Endothelial cell of umbilical vein (primary cell): ENCODE measurements at regions of chr5 and their contacts with region 1.

Region 1: DNA sequence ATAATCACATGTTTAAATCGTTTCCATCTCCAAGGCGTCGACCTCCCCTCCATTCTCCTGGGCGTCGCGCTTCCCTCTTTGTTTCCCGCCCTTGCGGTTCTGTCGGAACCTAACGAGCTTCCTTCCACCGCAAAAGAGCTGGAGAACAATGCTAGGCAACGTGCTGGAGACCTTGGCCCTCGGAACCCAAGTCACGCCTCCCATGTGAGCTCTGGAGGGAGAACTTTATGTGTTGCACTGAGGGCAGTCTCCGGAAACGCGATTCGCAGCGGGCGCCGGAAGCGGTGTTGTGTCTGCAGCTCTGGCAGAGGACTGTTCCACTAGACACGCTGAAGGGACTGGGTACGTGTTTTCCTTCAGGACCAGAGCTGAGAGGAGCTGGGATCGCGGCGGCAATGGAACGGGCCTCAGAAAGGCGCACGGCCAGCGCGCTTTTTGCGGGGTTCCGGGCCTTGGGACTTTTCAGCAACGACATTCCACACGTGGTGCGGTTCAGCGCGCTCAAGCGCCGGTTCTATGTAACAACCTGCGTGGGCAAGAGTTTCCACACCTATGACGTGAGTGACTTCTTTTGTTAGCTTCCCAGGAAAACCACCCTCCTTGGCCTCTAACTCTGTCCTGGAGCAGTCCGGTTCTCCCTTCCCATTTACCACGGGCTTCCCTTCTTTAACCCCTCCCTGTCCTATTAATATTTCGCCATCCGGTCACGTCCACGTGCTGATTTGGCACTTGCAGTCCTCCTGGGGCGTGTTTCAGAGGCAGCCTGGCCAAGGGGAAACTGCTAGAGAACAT is at the start of gene WDR36:
- DNase-seq: peak; percentile 91
- H3K4me3 ChIP-seq: peak within 1 kb of the TSS; percentile 25 to 95 (median 95)
- H3K27ac ChIP-seq: peak within 1 kb of the TSS; percentile 46
- H3K4me1 ChIP-seq: peaks cover 18% of the 10 kb centered on the region
- H3K27me3 ChIP-seq: no peaks in the 10 kb centered on the region
- CTCF ChIP-seq: no peak
- POLR2A ChIP-seq: peak; percentile 58
- total RNA-seq, gene WDR36: 30.2 and 33.8 TPM in 2 replicates

Region 2: GRCh38 chr5:110269478-110270142 is 822.6 kb before region 1 on chr5:
- CTCF ChIA-PET with region 1: no interaction called
- POLR2A ChIA-PET with region 1: no interaction called
- dilution Hi-C with region 1: no loop called
- intact Hi-C with region 1: no loop called
- DNase-seq: no peak
- H3K4me3 ChIP-seq: no peak overlapping the region
- H3K27ac ChIP-seq: no peak overlapping the region
- H3K4me1 ChIP-seq: no peaks in the 10 kb centered on the region
- H3K27me3 ChIP-seq: no peaks in the 10 kb centered on the region
- CTCF ChIP-seq: no peak
- POLR2A ChIP-seq: no peak

Region 3: DNA sequence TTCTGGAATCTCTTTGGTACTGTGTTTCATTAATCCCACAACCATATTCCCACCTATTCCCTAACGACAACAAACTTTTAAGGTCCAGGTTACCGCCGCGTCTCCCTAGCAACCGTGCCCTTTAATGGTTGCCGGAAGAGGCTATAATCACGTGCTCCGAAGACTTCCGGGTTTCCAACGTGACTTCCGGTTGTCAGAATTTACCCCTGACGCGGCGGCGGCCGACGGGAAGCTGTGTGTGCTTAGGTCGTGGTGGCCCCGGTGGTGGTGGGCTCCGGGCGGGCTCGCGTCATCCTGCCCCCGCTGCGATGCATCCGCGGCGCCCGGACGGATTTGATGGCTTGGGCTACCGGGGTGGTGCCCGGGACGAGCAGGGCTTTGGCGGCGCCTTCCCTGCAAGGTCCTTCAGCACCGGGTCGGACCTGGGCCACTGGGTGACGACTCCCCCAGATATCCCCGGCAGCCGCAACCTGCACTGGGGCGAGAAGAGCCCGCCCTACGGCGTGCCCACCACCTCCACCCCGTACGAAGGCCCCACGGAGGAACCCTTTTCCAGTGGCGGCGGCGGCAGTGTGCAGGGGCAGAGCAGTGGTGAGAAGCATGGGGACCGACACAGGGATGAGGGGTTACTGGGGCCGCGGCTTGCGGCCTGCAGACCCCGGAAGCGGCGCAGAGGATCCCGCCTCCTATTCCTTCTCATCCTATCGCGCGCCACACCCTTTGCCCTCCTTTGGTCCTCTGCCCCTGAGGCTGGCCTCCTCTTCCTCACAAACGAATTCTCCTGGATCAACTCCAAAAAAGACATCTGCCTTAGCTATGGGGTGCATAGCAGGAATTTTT is 353.2 kb before region 1 on chr5 and contains the start of gene SLC25A46:
- CTCF ChIA-PET with region 1: no interaction called
- POLR2A ChIA-PET with region 1: no interaction called
- dilution Hi-C with region 1: no loop called
- intact Hi-C with region 1: loop called (anchors 1 kb)
- DNase-seq: peak; percentile 90
- H3K4me3 ChIP-seq: peak within 1 kb of the TSS; percentile 6 to 76 (median 69)
- H3K27ac ChIP-seq: peak within 1 kb of the TSS; percentile 77
- H3K4me1 ChIP-seq: peaks cover 10% of the 10 kb centered on the region
- H3K27me3 ChIP-seq: peaks cover 1 to 11% of the 10 kb centered on the region in 2 experiments
- CTCF ChIP-seq: no peak
- POLR2A ChIP-seq: peak; percentile 63
- total RNA-seq, gene SLC25A46: 30.0 and 31.1 TPM in 2 replicates